ENCODE measurements at regions of chr19 and their contacts with region 1.

Region 1: GRCh38 chr19:47391510-47392223 is 27.7 kb downstream of the MEIS3 start:
- DNase-seq: peak; percentile 82
- H3K4me3 ChIP-seq: no peak overlapping the region; a peak in 1 of 4 replicates
- H3K27ac ChIP-seq: no peak overlapping the region
- H3K4me1 ChIP-seq: no peaks in the 10 kb centered on the region
- H3K27me3 ChIP-seq: no peaks in the 10 kb centered on the region
- CTCF ChIP-seq: peak; percentile 93
- EP300 ChIP-seq: no peak
- RAD21 ChIP-seq: peak; percentile 76

Region 2: GRCh38 chr19:47215581-47215980 is 176.1 kb before region 1 on chr19:
- CTCF ChIA-PET with region 1: no interaction called
- POLR2A ChIA-PET with region 1: no interaction called
- DNase-seq: no peak
- H3K4me3 ChIP-seq: no peak overlapping the region
- H3K27ac ChIP-seq: no peak overlapping the region
- H3K4me1 ChIP-seq: peaks cover under 1 to 7% of the 10 kb centered on the region in 2 experiments; a peak in 1 of 4 replicates
- H3K27me3 ChIP-seq: no peaks in the 10 kb centered on the region
- CTCF ChIP-seq: no peak
- EP300 ChIP-seq: no peak
- RAD21 ChIP-seq: no peak

Region 3: GRCh38 chr19:47284324-47284899 is 107.3 kb before region 1 on chr19:
- CTCF ChIA-PET with region 1: interaction called, 25 read pairs
- POLR2A ChIA-PET with region 1: no interaction called
- DNase-seq: peak; percentile 56
- H3K4me3 ChIP-seq: no peak overlapping the region
- H3K27ac ChIP-seq: no peak overlapping the region
- H3K4me1 ChIP-seq: peaks cover 0 to 8% of the 10 kb centered on the region in 2 experiments; a peak in 2 of 4 replicates
- H3K27me3 ChIP-seq: no peaks in the 10 kb centered on the region
- CTCF ChIP-seq: peak; percentile 88
- EP300 ChIP-seq: no peak
- RAD21 ChIP-seq: peak; percentile 66

Region 4: GRCh38 chr19:47348819-47349795 is 42.6 kb before region 1 on chr19 and contains the start of gene DHX34:
- CTCF ChIA-PET with region 1: interaction called, 19 read pairs
- POLR2A ChIA-PET with region 1: no interaction called
- DNase-seq: peak; percentile 100
- H3K4me3 ChIP-seq: peak within 1 kb of the TSS; percentile 75 to 89
- H3K27ac ChIP-seq: peak within 1 kb of the TSS; percentile 42 to 54; a peak in 2 of 4 replicates
- H3K4me1 ChIP-seq: peaks cover 8 to 17% of the 10 kb centered on the region in 2 experiments; a peak in 2 of 4 replicates
- H3K27me3 ChIP-seq: no peaks in the 10 kb centered on the region
- CTCF ChIP-seq: peak; percentile 94
- EP300 ChIP-seq: no peak
- RAD21 ChIP-seq: 0 out of 2 replicates have a peak, but pooled peaks have one; percentile 10
- polyA plus RNA-seq, gene DHX34: 14.8 and 16.4 TPM in 2 replicates

Region 5: GRCh38 chr19:47363758-47364531 is 27.7 kb before region 1 on chr19:
- CTCF ChIA-PET with region 1: interaction called, 17 read pairs
- POLR2A ChIA-PET with region 1: no interaction called
- DNase-seq: peak; percentile 29
- H3K4me3 ChIP-seq: no peak overlapping the region
- H3K27ac ChIP-seq: no peak overlapping the region
- H3K4me1 ChIP-seq: no peaks in the 10 kb centered on the region
- H3K27me3 ChIP-seq: no peaks in the 10 kb centered on the region
- CTCF ChIP-seq: no peak
- EP300 ChIP-seq: no peak
- RAD21 ChIP-seq: no peak

Region 6: GRCh38 chr19:47376589-47377144 is 15.0 kb before region 1 on chr19:
- CTCF ChIA-PET with region 1: interaction called, 14 read pairs
- POLR2A ChIA-PET with region 1: no interaction called
- DNase-seq: peak; percentile 24
- H3K4me3 ChIP-seq: no peak overlapping the region
- H3K27ac ChIP-seq: no peak overlapping the region
- H3K4me1 ChIP-seq: no peaks in the 10 kb centered on the region
- H3K27me3 ChIP-seq: no peaks in the 10 kb centered on the region
- CTCF ChIP-seq: no peak
- EP300 ChIP-seq: no peak
- RAD21 ChIP-seq: no peak

Region 7: GRCh38 chr19:47428177-47428894 is 36.7 kb after region 1 on chr19:
- CTCF ChIA-PET with region 1: interaction called, 23 read pairs
- POLR2A ChIA-PET with region 1: no interaction called
- DNase-seq: peak; percentile 96
- H3K4me3 ChIP-seq: peak overlapping the region; percentile 37 to 62
- H3K27ac ChIP-seq: peak overlapping the region; percentile 74 to 78
- H3K4me1 ChIP-seq: peaks cover 4 to 12% of the 10 kb centered on the region in 2 experiments; a peak in 2 of 4 replicates
- H3K27me3 ChIP-seq: no peaks in the 10 kb centered on the region
- CTCF ChIP-seq: no peak
- EP300 ChIP-seq: 0 out of 4 replicates have a peak, but pooled peaks of 1 of the 2 experiments have one; percentile 13
- RAD21 ChIP-seq: no peak

Region 8: GRCh38 chr19:47438793-47439220 is 47.1 kb after region 1 on chr19:
- CTCF ChIA-PET with region 1: no interaction called
- POLR2A ChIA-PET with region 1: no interaction called
- DNase-seq: no peak
- H3K4me3 ChIP-seq: no peak overlapping the region
- H3K27ac ChIP-seq: no peak overlapping the region
- H3K4me1 ChIP-seq: no peaks in the 10 kb centered on the region; a peak in 1 of 4 replicates
- H3K27me3 ChIP-seq: no peaks in the 10 kb centered on the region; the same call in 1 of the 2 replicates
- CTCF ChIP-seq: no peak
- EP300 ChIP-seq: no peak
- RAD21 ChIP-seq: no peak

Region 9: GRCh38 chr19:47497050-47497766 is 105.5 kb after region 1 on chr19:
- CTCF ChIA-PET with region 1: no interaction called
- POLR2A ChIA-PET with region 1: no interaction called
- DNase-seq: no peak
- H3K4me3 ChIP-seq: no peak overlapping the region
- H3K27ac ChIP-seq: peak overlapping the region in 1 of 2 experiments; percentile 84; a peak in 2 of 4 replicates
- H3K4me1 ChIP-seq: peaks cover 0 to 71% of the 10 kb centered on the region in 2 experiments; a peak in 1 of 4 replicates
- H3K27me3 ChIP-seq: no peaks in the 10 kb centered on the region
- CTCF ChIP-seq: no peak
- EP300 ChIP-seq: no peak
- RAD21 ChIP-seq: no peak

Measured in SK-N-SH (cell line).